Endothelial cell of umbilical vein (primary cell): ENCODE measurements at regions of chr16 and their contacts with region 1.

Region 1: DNA sequence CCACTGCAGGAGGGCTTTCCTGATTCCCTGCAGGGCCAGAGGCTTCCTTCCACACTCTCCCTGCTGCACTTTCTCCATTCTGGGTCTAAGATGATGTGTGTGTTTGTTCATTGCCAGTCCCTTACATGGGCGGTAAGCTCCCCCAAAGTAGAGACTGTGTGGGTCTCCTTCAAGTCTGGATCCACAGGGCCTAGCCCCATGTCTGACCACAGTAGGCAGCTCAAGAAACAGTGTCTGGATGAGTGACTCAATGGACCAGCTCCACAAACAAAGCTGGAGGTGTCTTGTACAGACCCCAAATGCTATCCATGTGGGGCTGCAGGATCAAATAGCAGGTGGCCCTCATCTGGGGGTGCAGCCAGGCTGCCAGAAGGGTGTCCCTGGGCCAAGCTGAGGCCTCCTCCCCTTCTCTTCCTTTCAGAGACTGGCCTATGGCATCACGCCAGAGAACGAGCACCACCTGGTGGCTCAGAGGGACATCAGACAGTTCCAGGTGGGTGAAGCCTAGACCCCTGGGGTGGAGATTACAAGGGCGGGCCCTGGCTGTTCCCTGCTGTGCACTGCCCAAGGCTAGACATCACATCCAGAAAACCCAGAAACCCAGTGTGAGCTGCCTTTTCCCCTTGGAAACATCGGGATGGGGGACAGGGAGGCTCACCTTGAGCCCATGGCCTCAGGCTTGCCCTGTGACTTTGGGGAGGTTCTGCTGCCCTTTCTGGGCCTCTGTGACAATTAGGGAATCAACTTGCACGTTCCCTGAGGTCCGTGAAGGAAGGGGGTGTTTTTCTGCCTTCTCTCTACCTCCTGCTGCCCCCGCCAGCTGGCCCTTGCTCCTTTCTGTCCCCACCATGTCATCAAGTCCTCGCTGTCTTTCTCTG is 45.9 kb downstream of the SLC6A2 start:
- DNase-seq: peak; percentile 49
- H3K4me3 ChIP-seq: no peak overlapping the region
- H3K27ac ChIP-seq: no peak overlapping the region
- H3K4me1 ChIP-seq: peaks cover 8% of the 10 kb centered on the region
- H3K27me3 ChIP-seq: peaks cover 7 to 8% of the 10 kb centered on the region in 2 experiments
- CTCF ChIP-seq: peak; percentile 65 to 69
- POLR2A ChIP-seq: no peak

Region 2: DNA sequence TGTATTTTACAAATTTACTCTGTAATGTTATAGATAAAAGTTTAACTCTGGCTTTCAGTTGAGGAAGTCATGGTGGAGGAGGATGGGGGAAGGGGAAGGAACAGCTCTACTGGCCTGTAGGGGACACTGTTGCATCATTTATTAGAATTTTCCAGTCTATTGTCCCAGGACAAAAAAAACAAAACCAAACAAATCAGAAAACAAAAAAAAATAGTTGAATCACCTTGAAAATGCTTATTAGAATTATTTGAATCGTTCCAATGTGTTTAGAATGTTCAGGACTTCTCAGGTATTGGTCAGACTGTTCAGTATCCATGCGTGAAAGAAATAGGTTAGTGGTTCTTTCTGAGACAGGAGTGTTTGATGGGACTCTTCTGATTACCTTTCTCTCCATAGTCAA is 1755.7 kb before region 1 on chr16:
- CTCF ChIA-PET with region 1: no interaction called
- POLR2A ChIA-PET with region 1: no interaction called
- dilution Hi-C with region 1: no loop called
- intact Hi-C with region 1: loop called (anchors 5 kb)
- DNase-seq: peak; percentile 58
- H3K4me3 ChIP-seq: no peak overlapping the region
- H3K27ac ChIP-seq: no peak overlapping the region
- H3K4me1 ChIP-seq: no peaks in the 10 kb centered on the region
- H3K27me3 ChIP-seq: no peaks in the 10 kb centered on the region
- CTCF ChIP-seq: peak; percentile 55 to 69
- POLR2A ChIP-seq: no peak

Region 3: DNA sequence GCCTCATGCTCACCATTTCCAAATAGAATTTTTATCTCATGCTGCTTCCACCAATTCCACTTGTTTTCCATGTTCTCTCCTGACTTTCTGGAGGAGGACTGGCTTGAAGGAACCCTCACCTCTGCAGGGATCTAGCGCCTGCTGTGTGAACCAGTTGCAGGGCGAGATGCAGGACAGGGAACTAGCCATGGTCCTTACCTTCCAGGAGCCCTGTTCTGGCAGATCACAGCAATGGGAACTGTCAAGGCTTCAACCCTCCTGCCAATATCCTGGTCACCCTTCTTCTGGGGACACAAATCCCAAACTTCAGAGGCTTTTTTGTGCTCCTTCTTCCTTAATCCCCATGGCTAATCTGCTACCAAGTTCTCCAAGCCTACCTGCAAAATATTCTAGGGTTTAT is 283.1 kb before region 1 on chr16:
- CTCF ChIA-PET with region 1: no interaction called
- POLR2A ChIA-PET with region 1: no interaction called
- dilution Hi-C with region 1: no loop called
- intact Hi-C with region 1: no loop called
- DNase-seq: no peak
- H3K4me3 ChIP-seq: no peak overlapping the region
- H3K27ac ChIP-seq: no peak overlapping the region
- H3K4me1 ChIP-seq: no peaks in the 10 kb centered on the region
- H3K27me3 ChIP-seq: no peaks in the 10 kb centered on the region
- CTCF ChIP-seq: no peak
- POLR2A ChIP-seq: no peak

Region 4: GRCh38 chr16:55494994-55495421 is 206.7 kb before region 1 on chr16:
- CTCF ChIA-PET with region 1: interaction called, 69 read pairs
- POLR2A ChIA-PET with region 1: no interaction called
- dilution Hi-C with region 1: no loop called
- intact Hi-C with region 1: loop called (anchors 1 kb)
- DNase-seq: peak; percentile 85
- H3K4me3 ChIP-seq: no peak overlapping the region
- H3K27ac ChIP-seq: peak overlapping the region; percentile 2
- H3K4me1 ChIP-seq: peaks cover 52% of the 10 kb centered on the region
- H3K27me3 ChIP-seq: no peaks in the 10 kb centered on the region
- CTCF ChIP-seq: peak; percentile 20 to 33
- POLR2A ChIP-seq: no peak

Region 5: GRCh38 chr16:55508941-55509931 is 192.4 kb before region 1 on chr16 and contains the start of gene LPCAT2:
- CTCF ChIA-PET with region 1: interaction called, 12 read pairs
- POLR2A ChIA-PET with region 1: no interaction called
- dilution Hi-C with region 1: no loop called
- intact Hi-C with region 1: no loop called
- DNase-seq: peak; percentile 90
- H3K4me3 ChIP-seq: peak within 1 kb of the TSS; percentile 65 to 99 (median 94)
- H3K27ac ChIP-seq: peak within 1 kb of the TSS; percentile 80
- H3K4me1 ChIP-seq: peaks cover 10% of the 10 kb centered on the region
- H3K27me3 ChIP-seq: no peaks in the 10 kb centered on the region
- CTCF ChIP-seq: peak in 1 of 2 donors; percentile 4
- POLR2A ChIP-seq: peak; percentile 90
- total RNA-seq, gene LPCAT2: 72.9 and 79.1 TPM in 2 replicates

Region 6: DNA sequence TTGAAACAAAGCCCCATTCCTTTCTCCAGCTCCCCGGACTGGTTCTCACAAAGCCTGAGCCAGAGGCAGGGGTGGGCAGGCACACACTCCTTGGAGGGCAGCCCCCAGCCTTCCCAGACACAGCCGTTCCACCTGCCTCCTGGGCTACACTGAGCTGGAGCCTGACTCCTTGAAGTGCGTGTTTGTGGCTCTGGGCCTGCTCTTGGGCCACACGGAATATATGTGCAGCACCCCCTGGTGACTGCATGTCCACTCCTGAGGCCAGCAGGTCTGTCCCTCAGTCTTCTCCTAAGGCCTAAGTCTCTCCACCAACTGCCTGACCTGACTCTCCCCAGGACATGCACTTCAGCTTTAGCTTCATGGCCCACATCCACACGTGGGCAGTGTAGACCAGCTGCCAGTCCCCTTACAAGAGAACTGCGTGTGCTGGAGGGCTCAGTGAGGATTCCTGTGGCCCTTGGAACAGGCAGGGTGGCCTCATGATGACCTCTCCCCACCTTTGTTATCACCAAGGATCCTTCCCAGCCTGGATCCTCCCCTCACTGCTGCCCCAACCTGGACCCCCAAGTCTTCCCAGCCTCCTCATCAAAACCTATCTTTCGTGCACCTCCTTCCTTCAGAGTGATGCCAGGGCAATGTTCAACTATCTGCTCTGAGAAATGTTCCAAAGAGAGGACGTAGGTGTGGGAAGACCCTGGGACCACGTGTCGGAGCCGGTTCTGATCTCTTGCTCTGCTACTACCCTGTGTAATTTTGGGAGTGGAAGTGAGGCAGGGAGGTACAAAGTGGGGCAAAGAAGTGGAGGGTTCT is 58.3 kb before region 1 on chr16:
- CTCF ChIA-PET with region 1: interaction called, 9 read pairs
- POLR2A ChIA-PET with region 1: no interaction called
- dilution Hi-C with region 1: no loop called
- intact Hi-C with region 1: loop called (anchors 1 kb)
- DNase-seq: peak; percentile 33
- H3K4me3 ChIP-seq: no peak overlapping the region
- H3K27ac ChIP-seq: no peak overlapping the region
- H3K4me1 ChIP-seq: no peaks in the 10 kb centered on the region
- H3K27me3 ChIP-seq: peaks cover 5 to 9% of the 10 kb centered on the region in 2 experiments
- CTCF ChIP-seq: peak; percentile 11 to 58
- POLR2A ChIP-seq: no peak